Pancreas (tissue), 10 donors: ENCODE measurements at regions of chr2 and their contacts with region 1.

Region 1: GRCh38 chr2:240640939-240641338 is 15.7 kb downstream of the GPR35 start:
- DNase-seq: peak; percentile 45 to 92 (median 74)
- ATAC-seq: peak; percentile 70 to 96 (median 92)
- H3K4me3 ChIP-seq: no peak overlapping the region
- H3K27ac ChIP-seq: no peak overlapping the region
- H3K4me1 ChIP-seq: no peaks in the 10 kb centered on the region
- H3K27me3 ChIP-seq: no peaks in the 10 kb centered on the region
- CTCF ChIP-seq: peak in 2 of 4 donors; percentile 37 to 46

Region 2: DNA sequence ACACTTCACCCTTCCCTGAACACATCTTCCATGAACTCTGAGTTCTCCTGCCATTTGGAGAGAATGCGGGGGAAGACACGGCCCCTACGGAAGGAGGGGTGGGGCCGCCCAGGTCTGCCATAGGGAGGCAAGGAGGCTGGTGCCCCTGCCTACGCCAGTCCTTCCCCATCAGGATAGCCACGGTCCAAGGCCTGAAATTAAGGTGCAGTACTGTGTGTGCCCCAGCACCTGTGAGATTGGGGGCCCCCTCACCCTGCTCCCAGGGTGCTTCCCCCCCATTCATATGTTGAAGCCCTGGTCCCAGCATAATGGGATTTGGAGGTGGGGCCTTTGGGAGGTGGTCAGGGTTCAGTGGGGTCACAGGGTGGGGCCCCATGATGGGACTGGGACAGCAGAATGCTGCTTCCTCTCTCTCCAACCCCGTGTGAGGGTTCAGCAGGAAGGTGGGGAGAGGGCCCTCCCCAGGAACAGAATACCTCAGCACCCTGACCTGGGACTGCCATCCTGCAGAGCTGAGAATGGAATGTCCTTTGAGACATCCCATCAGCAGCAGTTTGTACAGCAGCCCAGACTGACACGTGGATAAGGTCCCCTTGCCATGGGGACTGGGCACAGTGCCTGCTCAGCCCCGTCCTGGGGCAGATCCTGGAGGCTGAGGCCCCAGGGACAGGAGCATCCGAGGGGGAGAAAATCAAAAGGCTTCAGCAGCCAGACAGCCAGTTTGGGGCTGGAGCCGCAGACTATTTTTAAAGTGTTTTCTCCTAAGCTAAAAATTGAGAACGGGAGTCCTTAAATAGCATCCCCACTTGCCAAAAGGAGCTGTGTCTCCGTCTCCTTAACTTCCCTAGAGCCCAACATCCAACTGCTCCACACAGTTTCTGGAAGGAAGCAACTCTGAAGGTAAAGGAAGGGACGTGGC is 720.9 kb before region 1 on chr2:
- intact Hi-C with region 1: no loop called
- DNase-seq: peak in 1 of 6 donors; percentile 25
- ATAC-seq: no peak
- H3K4me3 ChIP-seq: no peak overlapping the region
- H3K27ac ChIP-seq: no peak overlapping the region
- H3K4me1 ChIP-seq: no peaks in the 10 kb centered on the region
- H3K27me3 ChIP-seq: no peaks in the 10 kb centered on the region
- CTCF ChIP-seq: no peak

Region 3: DNA sequence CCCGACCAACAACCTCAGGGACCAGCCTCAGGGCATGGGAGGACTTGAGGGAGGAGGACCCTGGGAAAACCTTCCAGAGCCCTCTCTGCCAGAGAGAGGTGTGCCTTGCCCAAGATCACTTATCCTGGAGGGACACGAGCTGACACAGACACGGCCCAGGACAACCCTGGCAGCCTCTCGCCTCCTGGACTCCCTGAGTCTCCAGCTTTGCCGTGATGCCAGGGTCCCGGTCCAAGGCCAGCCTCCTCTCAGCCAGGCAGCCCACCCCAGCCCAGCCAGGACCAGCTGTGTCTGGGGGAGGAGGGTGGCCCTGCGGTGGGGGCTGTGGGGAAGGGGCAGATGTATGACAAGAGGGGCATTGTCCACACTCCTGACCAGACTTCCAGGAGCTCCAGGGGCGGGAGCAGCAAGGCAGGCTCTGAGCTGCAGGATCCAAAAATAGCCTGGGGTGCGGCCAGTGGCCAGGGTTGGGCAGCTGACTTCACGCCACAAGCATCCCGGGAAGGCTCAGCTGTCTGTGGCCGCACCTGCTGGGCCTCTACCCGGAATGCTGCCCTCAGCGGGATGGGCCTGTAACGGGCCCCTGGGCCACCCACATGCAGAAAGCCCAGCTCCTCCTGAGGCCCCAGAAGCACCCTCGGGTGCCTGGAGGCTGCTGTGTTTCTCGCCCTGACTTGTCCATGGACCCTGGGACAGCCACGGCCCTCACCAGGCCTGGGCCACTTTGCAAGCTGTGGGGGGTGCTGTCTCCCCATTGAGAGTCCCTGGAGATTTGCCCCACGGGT is 270.9 kb before region 1 on chr2:
- intact Hi-C with region 1: no loop called
- DNase-seq: peak in 5 of 6 donors; percentile 59 to 80 (median 63)
- ATAC-seq: peak; percentile 73 to 82 (median 80)
- H3K4me3 ChIP-seq: no peak overlapping the region
- H3K27ac ChIP-seq: peak overlapping the region; percentile 59 to 80 (median 68)
- H3K4me1 ChIP-seq: peaks cover 0 to 9% (median 0%) of the 10 kb centered on the region in 3 donors
- H3K27me3 ChIP-seq: no peaks in the 10 kb centered on the region
- CTCF ChIP-seq: no peak

Region 4: GRCh38 chr2:240704651-240705050 is 63.7 kb after region 1 on chr2:
- intact Hi-C with region 1: loop called in 1 of 3 experiments (anchors 10 kb)
- DNase-seq: peak in 2 of 6 donors; percentile 35 to 40
- ATAC-seq: no peak
- H3K4me3 ChIP-seq: no peak overlapping the region
- H3K27ac ChIP-seq: no peak overlapping the region
- H3K4me1 ChIP-seq: no peaks in the 10 kb centered on the region
- H3K27me3 ChIP-seq: no peaks in the 10 kb centered on the region
- CTCF ChIP-seq: no peak